Activated naive CD4-positive, alpha-beta T cell treated with anti-CD3 and anti-CD28 coated beads for 36 hours (primary cell): ENCODE measurements at regions of chr15 and their contacts with region 1.

Region 1: DNA sequence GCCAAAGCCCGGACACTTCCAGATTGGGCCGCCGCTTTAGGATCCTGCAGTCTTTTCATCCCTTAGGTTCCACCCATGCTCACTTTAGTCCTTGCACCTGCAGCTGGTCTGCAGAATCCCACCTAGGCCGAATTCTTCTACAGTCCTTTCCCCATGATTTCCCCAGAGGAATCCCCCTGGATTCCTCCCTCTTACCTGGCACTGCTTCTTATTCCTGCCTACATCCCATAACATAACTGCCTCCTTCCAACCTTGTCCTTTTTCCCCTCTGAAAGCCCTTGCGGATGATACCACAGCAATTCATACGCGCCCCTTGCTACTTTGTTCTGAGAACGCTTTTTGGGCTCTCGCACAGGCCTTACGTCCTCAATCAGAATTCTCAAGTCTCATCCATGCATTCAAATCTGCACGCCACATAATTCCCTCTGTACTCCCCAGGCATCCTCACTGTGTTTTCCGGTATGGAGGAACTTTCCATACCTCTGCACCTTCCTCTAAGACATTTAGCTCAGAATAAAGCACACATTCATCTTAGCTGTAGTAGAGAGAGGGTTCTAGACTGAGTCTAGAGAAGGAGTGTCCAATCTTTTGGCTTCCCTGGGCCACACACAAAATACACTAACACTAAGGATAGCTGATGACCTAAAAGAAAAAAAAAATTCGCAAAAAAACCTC is 619 bp downstream of the EIF2AK4 start:
- DNase-seq: peak; percentile 8
- H3K4me3 Mint-ChIP-seq: peak overlapping the region; percentile 89
- H3K27ac Mint-ChIP-seq: peak overlapping the region; percentile 52
- H3K4me1 Mint-ChIP-seq: peaks cover 27% of the 10 kb centered on the region
- H3K27me3 Mint-ChIP-seq: no peaks in the 10 kb centered on the region

Region 2: DNA sequence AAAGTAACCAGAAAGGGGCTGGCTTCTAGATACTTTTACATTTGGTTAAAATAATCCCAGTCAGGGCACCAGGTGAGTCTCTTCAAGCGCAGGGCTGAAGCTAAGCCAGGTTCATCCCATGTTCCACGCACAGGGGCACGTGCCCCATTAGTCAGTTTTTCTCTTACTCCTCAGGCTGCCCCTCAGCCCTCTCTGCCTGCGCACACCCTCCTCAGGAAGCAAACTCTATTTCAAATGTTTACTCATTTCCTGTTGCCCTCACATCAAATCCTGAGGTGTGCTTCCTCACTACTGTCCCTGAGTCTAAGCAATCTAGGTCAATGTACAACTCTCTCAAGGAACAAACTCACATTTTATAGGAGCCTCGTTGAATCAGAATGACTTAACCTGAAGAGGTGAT is 305.2 kb before region 1 on chr15:
- CTCF ChIA-PET with region 1: no interaction called
- intact Hi-C with region 1: loop called (anchors 1 kb)
- DNase-seq: peak; percentile 82
- H3K4me3 Mint-ChIP-seq: no peak overlapping the region
- H3K27ac Mint-ChIP-seq: peak overlapping the region; percentile 14
- H3K4me1 Mint-ChIP-seq: peaks cover 49% of the 10 kb centered on the region
- H3K27me3 Mint-ChIP-seq: no peaks in the 10 kb centered on the region

Region 3: DNA sequence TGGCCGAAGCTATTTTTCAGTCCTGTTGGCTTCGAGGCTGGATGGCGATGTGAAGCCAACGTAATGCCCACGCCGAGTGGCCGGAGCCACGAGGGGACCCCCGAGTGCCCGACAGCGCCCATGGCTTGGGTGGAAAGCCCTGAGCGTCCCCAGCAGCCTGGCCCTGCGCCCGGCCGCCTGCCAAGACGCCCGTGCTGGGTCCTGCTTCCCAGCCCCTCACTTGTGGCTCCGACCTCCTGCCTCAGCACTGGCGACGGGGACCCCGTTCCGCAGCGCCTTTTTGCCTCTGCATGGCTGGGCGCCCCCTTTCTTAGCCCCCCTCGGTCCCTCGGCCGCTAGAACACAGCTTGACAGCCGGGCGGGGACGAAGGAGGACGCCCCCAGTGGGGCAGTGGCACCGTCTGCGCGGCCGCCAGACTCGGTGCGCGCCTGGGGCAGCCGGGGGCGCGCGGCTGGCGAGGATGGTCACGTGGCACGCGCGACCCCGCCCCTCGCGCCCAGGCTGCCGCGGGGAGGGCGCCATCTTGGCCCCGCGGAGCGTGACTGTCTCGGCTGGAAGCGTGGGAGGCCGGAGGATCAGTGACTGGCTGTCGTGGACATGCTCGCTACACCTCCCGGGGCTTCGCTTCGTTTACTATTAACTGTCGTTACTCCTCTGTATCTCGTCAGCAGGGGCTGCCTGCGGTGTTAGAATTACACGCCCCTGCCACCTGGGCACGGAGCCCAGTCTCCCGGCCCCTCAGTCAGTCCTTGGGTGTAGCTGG is 13.8 kb before region 1 on chr15:
- CTCF ChIA-PET with region 1: interaction called, 4 read pairs
- intact Hi-C with region 1: loop called (anchors 1 kb)
- DNase-seq: peak; percentile 87
- H3K4me3 Mint-ChIP-seq: peak overlapping the region; percentile 84
- H3K27ac Mint-ChIP-seq: peak overlapping the region; percentile 65
- H3K4me1 Mint-ChIP-seq: peaks cover 17% of the 10 kb centered on the region
- H3K27me3 Mint-ChIP-seq: peaks cover 20% of the 10 kb centered on the region

Region 4: DNA sequence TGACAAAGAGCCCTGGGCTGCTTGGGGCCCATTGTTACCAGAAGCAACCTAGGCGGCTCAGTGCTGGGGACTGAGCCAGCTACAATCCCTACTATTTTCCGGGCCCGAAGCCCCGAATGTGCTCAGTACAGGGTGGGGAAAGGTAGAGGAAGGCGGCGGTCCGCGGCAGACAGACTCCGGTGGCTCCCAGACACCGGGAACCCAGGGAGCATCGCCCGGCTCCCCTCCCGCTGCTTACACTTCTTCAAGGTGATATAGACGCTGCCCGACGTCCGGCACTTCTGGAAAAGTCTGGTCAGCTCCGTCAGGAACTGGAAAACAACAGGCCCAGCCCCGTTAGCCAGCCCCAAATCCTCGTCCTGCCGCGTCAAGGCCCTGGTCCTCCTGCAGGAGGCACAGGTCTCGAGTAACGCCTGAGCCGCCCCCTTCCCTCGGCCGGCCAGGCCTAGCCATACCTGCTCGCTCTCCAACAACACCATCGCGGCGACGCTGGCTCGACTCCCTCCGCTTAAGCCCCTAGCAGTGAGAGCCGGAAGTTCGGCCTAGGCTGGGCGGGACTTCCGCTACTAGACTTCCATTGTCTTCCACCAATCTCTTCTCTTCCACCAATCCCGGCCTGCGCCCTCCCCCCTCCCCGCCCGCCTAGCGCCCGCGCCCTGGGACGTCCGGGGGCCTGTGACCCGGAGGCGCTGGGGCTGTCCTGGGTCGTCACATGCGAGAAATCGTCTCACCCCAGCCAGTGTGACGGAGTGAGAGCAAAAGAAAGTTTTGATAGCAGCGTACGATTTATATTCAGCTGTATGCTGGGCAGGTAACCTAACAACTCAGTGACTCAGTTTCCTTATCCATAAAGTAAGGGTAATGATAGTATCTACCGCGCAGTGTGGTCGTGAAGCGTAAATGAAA is 104.4 kb after region 1 on chr15 and contains the start of gene SRP14:
- CTCF ChIA-PET with region 1: interaction called, 3 read pairs
- intact Hi-C with region 1: loop called (anchors 2 kb)
- DNase-seq: peak; percentile 97
- H3K4me3 Mint-ChIP-seq: peak within 1 kb of the TSS; percentile 91
- H3K27ac Mint-ChIP-seq: peak within 1 kb of the TSS; percentile 92
- H3K4me1 Mint-ChIP-seq: peaks cover 37% of the 10 kb centered on the region
- H3K27me3 Mint-ChIP-seq: no peaks in the 10 kb centered on the region
- total RNA-seq, gene SRP14: 185 to 198 TPM